ENCODE measurements at regions of chr2 and their contacts with region 1.

Region 1: GRCh38 chr2:238256594-238257104 is 16.8 kb upstream of the HES6 start:
- DNase-seq: peak; percentile 76
- H3K4me3 ChIP-seq: no peak overlapping the region
- H3K27ac ChIP-seq: no peak overlapping the region
- H3K4me1 ChIP-seq: no peaks in the 10 kb centered on the region
- H3K27me3 ChIP-seq: no peaks in the 10 kb centered on the region
- CTCF ChIP-seq: peak; percentile 99

Region 2: GRCh38 chr2:238160206-238161109 is 96.2 kb before region 1 on chr2:
- CTCF ChIA-PET with region 1: no interaction called
- dilution Hi-C with region 1: no loop called
- in situ Hi-C with region 1: no loop called
- intact Hi-C with region 1: loop called (anchors 2 kb)
- DNase-seq: no peak
- H3K4me3 ChIP-seq: no peak overlapping the region
- H3K27ac ChIP-seq: no peak overlapping the region
- H3K4me1 ChIP-seq: peaks cover 4% of the 10 kb centered on the region
- H3K27me3 ChIP-seq: peaks cover 9% of the 10 kb centered on the region
- CTCF ChIP-seq: peak in 1 of 2 donors; percentile 16

Region 3: DNA sequence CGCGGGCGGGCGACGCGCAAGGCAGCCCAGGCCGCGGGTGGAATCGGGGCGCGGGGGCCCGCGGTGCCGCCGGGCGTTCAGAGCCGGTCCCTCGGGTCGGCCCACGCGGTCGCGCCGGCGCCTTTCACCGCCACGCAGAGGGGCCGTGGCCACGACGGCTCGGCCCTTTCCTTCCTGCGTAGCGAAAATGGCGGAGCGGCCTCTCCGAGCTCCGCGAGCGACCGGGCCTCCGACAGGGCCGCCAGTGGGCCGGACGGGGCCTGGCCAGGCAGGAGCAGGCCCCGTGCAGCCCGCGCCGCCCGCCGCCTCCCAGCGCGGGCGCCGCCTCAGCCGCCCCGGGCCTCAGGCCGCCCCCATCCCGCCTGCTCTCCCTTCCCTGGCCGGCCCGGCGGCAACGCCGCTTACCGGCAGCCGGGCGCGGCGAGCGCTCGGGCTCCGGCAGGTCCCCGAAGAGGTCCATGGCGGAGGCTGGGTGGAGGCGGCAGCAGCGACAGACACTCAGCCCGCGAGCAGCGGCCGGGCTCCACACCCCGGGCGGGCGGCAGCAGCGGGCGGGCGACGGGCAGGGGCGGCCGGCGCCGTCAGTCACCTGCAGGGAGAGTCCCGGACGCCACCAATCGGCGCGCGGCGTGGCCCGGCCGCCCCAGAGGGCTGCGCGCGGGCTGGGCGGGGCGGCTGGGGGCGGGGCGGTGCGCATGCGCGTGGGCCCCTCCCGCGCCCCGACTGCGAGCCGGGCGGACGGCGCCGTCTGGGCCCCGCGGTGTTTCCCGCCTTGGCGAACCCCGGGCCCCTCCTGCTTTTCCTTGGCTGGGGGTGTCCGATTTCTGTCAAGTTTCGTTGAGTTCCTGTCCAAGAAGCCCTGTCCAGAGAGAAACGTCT is 53.3 kb before region 1 on chr2 and contains the start of gene ILKAP:
- CTCF ChIA-PET with region 1: no interaction called
- dilution Hi-C with region 1: no loop called
- in situ Hi-C with region 1: no loop called
- intact Hi-C with region 1: no loop called
- DNase-seq: peak; percentile 80
- H3K4me3 ChIP-seq: peak within 1 kb of the TSS; percentile 70 to 98 (median 83)
- H3K27ac ChIP-seq: peak within 1 kb of the TSS; percentile 69
- H3K4me1 ChIP-seq: peaks cover 13% of the 10 kb centered on the region
- H3K27me3 ChIP-seq: no peaks in the 10 kb centered on the region
- CTCF ChIP-seq: no peak
- total RNA-seq, gene ILKAP: 16.7 to 52.7 TPM

Region 4: DNA sequence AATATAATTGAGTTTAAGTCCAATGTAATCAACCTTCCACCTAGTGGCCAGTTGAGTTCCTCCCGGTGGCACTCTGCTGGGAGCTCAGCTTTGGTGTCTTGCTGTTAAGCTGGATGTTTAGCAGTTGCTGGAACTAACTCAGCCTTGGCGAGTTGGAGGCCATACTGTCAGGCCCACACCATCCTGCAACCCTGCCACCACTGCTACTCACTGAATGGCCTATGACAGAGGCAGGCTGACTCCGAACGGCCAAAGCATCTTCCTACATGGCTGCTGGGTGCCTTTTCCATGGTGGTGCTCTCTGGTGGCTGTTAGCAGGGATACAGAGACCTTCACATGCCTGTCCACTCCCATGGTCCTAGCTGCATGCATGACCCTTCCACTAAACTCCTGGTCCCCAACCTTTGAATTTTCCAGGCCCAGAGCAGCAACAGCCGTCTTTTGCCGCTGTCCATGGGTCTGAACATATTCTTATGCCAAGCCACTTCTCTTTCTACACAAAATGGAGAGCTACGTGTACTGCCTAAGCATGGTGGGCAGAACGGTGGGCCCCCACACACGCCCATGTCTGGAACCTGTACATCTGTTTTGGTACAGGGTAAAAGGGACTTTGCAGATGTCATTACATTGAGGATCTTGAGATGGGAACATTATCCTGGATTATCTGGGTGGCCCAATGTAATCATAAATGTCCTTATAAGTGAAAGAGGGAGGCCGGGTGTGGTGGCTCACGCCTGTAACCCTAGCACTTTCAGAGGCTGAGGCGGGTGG is 48.6 kb after region 1 on chr2:
- CTCF ChIA-PET with region 1: no interaction called
- dilution Hi-C with region 1: no loop called
- in situ Hi-C with region 1: no loop called
- intact Hi-C with region 1: loop called (anchors 1 kb)
- DNase-seq: no peak
- H3K4me3 ChIP-seq: no peak overlapping the region
- H3K27ac ChIP-seq: no peak overlapping the region
- H3K4me1 ChIP-seq: no peaks in the 10 kb centered on the region
- H3K27me3 ChIP-seq: no peaks in the 10 kb centered on the region
- CTCF ChIP-seq: peak; percentile 44 to 56

Region 5: GRCh38 chr2:238320246-238320647 is 63.6 kb after region 1 on chr2 and contains the start of gene TRAF3IP1:
- CTCF ChIA-PET with region 1: no interaction called
- dilution Hi-C with region 1: no loop called
- in situ Hi-C with region 1: no loop called
- intact Hi-C with region 1: loop called (anchors 1 kb)
- DNase-seq: peak; percentile 92
- H3K4me3 ChIP-seq: peak within 1 kb of the TSS; percentile 66 to 85 (median 73)
- H3K27ac ChIP-seq: peak within 1 kb of the TSS; percentile 78
- H3K4me1 ChIP-seq: peaks cover 17% of the 10 kb centered on the region
- H3K27me3 ChIP-seq: no peaks in the 10 kb centered on the region
- CTCF ChIP-seq: no peak
- total RNA-seq, gene TRAF3IP1: 7.0 to 18.1 TPM

Region 6: GRCh38 chr2:238339395-238340213 is 83.0 kb after region 1 on chr2:
- CTCF ChIA-PET with region 1: no interaction called
- dilution Hi-C with region 1: no loop called
- in situ Hi-C with region 1: loop called in 1 of 2 experiments (anchors 10 kb)
- intact Hi-C with region 1: loop called (anchors 1 kb)
- DNase-seq: peak; percentile 53
- H3K4me3 ChIP-seq: no peak overlapping the region
- H3K27ac ChIP-seq: no peak overlapping the region
- H3K4me1 ChIP-seq: peaks cover 8% of the 10 kb centered on the region
- H3K27me3 ChIP-seq: no peaks in the 10 kb centered on the region
- CTCF ChIP-seq: peak; percentile 3 to 42

Region 7: DNA sequence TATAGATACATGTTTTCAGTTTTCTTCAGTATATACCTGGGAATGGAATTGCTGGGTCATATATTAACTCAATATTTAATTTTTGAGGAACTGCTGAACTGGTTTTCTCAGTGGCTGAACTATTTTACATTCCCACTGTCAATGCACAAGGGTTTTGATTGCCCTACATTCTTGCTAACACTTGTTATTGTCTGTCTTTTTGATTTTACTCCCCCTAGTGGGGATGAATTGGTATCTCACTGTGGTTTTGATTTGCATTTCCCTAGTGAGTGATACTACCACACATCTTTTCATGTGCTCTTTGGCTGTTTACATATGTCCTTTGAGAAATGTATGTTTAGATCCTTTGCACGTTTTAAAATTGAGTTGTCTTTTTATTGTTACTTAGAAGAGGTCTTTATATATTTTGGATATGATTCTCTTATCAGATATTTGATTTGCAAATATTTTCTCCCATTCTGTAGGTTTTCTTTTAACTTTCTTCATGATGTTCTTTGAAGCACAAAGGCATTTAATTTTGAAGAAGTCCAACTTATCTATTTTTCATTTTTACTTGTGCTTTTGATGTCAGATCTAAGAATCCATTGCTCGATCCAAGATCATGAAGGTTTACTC is 206.2 kb after region 1 on chr2:
- CTCF ChIA-PET with region 1: no interaction called
- dilution Hi-C with region 1: no loop called
- in situ Hi-C with region 1: no loop called
- intact Hi-C with region 1: loop called (anchors 1 kb)
- DNase-seq: peak; percentile 61
- H3K4me3 ChIP-seq: no peak overlapping the region
- H3K27ac ChIP-seq: no peak overlapping the region
- H3K4me1 ChIP-seq: peaks cover 16% of the 10 kb centered on the region
- H3K27me3 ChIP-seq: no peaks in the 10 kb centered on the region
- CTCF ChIP-seq: peak; percentile 73